Activated B cell treated with CpG ODN at 0.5 μM for 24 hours (primary cell): ENCODE measurements at regions of chr5 and their contacts with region 1.

Region 1: GRCh38 chr5:134904630-134905245 is at the start of gene PCBD2:
- DNase-seq: peak; percentile 92
- ATAC-seq: peak; percentile 80
- H3K4me3 Mint-ChIP-seq: peak within 1 kb of the TSS; percentile 91
- H3K27ac Mint-ChIP-seq: peak within 1 kb of the TSS; percentile 96
- H3K4me1 Mint-ChIP-seq: peaks cover 37% of the 10 kb centered on the region
- H3K27me3 Mint-ChIP-seq: no peaks in the 10 kb centered on the region
- CTCF ChIP-seq: no peak
- total RNA-seq, gene PCBD2: 8.4 and 11.5 TPM in 2 replicates

Region 2: DNA sequence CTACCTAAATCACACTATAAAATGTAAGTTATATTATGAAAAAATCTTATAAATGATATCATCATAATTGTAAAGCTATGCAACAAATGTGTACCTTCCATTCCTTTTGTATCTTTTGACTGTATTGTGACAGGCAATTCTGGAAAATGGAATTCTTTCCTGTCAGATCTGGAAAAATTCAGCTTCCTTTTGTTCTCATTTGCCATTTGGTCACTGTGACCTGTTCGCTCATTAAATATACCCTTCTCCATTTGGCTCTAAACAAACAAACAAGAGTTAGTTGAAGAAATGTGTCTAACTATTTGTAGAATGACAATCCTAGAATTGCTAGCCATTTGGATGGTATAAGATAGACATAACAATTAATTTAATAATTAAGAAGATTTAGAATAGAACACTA is 600.4 kb before region 1 on chr5:
- CTCF ChIA-PET with region 1: no interaction called
- POLR2A ChIA-PET with region 1: no interaction called
- intact Hi-C with region 1: loop called (anchors 2 kb)
- DNase-seq: no peak
- ATAC-seq: no peak
- H3K4me3 Mint-ChIP-seq: no peak overlapping the region
- H3K27ac Mint-ChIP-seq: no peak overlapping the region
- H3K4me1 Mint-ChIP-seq: no peaks in the 10 kb centered on the region
- H3K27me3 Mint-ChIP-seq: no peaks in the 10 kb centered on the region
- CTCF ChIP-seq: no peak

Region 3: DNA sequence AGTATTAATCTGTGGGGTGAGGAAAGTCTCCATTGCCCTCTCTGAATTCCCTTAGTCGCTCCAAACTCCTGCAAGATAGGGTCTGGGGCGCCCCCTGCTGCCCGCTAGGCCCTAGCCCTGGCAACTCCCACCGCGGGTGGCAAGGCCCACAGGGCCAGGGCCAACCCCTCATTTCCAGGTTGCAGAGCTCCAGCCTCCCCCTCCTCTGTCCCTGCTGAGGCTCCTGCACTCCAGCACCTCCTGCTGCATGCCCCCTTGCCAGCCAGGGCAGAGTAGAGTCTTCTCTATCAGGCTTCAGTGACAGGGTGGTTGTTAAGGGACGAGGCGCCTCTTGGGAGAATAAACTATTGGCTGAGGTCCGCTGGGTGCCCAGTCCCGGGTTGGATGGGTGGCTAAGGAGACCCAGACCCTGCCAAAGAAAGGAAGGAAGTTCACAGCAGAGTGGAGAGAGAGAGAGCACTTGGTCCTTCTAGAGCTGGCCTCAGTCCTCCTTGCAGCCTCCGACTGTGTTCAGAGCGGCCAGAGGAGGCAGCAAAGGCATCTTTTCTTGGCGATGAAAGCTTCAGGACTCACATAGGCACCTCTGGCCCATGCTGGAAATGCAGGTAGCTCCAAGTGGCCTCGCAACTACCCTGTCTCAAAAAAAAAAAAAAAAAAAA is 317.7 kb before region 1 on chr5:
- CTCF ChIA-PET with region 1: interaction called, 4 read pairs
- POLR2A ChIA-PET with region 1: interaction called, 3 read pairs
- intact Hi-C with region 1: loop called (anchors 1 kb)
- DNase-seq: peak; percentile 79
- ATAC-seq: peak; percentile 91
- H3K4me3 Mint-ChIP-seq: peak overlapping the region; percentile 15
- H3K27ac Mint-ChIP-seq: no peak overlapping the region
- H3K4me1 Mint-ChIP-seq: peaks cover 18% of the 10 kb centered on the region
- H3K27me3 Mint-ChIP-seq: no peaks in the 10 kb centered on the region
- CTCF ChIP-seq: peak; percentile 20

Region 4: DNA sequence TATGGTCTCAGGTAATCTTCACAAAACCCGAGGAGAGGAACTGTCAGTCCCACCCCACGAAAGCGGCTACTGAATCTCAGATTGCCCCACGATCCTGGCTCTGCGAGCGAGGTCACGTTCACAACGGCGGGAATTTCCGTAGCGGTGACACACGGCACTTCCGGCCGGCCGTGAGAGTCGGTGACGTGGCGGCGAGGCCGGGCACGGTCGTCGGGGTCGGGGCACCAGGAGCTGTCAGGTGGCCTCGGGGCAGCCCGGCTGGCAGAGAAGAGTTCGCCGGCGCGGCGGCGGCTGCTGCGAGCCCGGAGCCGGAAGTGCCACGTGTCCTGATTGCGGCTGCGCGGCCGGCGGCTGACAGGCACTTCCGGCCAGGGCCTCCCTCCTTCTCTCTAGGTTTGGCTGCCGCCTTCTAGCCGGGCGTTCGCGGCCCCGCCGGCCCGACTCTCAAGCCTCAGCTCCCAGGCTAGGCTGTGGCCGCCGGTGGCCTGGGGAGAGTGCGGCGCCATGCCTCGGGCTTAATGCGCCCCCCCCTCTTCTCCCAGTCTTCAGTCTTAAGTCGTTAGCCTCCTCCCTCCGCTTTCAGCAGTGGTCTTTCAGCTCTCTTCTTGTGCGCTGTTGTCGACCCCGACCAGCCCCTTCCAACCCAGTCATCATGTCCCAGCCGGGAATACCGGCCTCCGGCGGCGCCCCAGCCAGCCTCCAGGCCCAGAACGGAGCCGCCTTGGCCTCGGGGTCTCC is 256.1 kb before region 1 on chr5 and contains the start of gene SEC24A:
- CTCF ChIA-PET with region 1: no interaction called
- POLR2A ChIA-PET with region 1: interaction called, 4 read pairs
- intact Hi-C with region 1: loop called (anchors 1 kb)
- DNase-seq: peak; percentile 86
- ATAC-seq: peak; percentile 77
- H3K4me3 Mint-ChIP-seq: peak within 1 kb of the TSS; percentile 91
- H3K27ac Mint-ChIP-seq: peak within 1 kb of the TSS; percentile 96
- H3K4me1 Mint-ChIP-seq: peaks cover 22% of the 10 kb centered on the region
- H3K27me3 Mint-ChIP-seq: no peaks in the 10 kb centered on the region
- CTCF ChIP-seq: no peak
- total RNA-seq, gene SEC24A: 13.8 and 15.6 TPM in 2 replicates

Region 5: DNA sequence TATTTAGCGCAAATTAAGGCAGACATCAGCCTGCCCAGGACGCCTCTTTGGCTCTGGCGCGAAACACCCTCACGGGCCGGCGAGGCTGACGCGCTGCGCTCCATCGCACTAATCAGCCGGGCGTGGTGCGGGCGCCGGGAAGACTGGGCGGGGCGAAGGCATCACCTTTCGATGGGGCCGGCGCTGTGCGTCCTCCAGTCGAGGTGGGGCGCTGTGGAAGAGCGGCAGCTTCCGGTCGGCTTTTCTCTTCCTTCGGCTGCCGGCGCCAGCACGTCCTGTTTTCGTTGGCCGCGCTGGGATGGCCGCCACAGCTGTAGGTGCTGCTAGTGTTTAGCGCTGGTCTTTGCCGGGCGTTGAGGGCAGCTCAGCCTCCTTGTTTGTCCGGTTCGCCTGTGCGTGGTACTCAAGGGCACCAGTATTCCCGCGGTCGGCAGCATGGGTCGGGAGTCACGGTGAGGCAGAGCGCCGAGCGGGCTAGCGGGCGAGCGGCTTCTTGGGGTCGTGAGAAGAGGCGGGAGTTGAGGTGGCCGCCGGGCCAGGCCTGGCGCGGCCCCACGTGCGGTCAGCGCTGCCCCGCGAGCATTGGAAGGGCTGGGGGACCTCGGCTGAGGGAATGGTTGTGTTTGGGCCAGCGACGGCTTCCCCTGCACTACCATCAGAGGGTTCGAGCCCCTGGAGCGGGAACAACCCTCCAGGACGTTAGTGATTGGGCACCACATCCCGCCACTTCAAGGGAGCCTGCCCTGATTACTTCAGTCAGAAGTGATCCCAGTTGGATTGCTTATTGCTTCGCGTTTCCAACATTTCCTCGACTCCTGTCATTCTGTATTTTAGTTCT is 146.0 kb before region 1 on chr5 and contains the start of gene DDX46:
- CTCF ChIA-PET with region 1: interaction called, 6 read pairs
- POLR2A ChIA-PET with region 1: interaction called, 20 read pairs
- intact Hi-C with region 1: loop called (anchors 1 kb)
- DNase-seq: peak; percentile 95
- ATAC-seq: peak; percentile 99
- H3K4me3 Mint-ChIP-seq: peak within 1 kb of the TSS; percentile 100
- H3K27ac Mint-ChIP-seq: peak within 1 kb of the TSS; percentile 94
- H3K4me1 Mint-ChIP-seq: peaks cover 36% of the 10 kb centered on the region
- H3K27me3 Mint-ChIP-seq: no peaks in the 10 kb centered on the region
- CTCF ChIP-seq: no peak
- total RNA-seq, gene DDX46: 68.8 and 74.1 TPM in 2 replicates

Region 6: GRCh38 chr5:134813407-134813806 is 91.3 kb before region 1 on chr5:
- CTCF ChIA-PET with region 1: interaction called, 5 read pairs
- POLR2A ChIA-PET with region 1: no interaction called
- intact Hi-C with region 1: loop called (anchors 1 kb)
- DNase-seq: no peak
- ATAC-seq: peak; percentile 73
- H3K4me3 Mint-ChIP-seq: peak overlapping the region; percentile 15
- H3K27ac Mint-ChIP-seq: peak overlapping the region; percentile 74
- H3K4me1 Mint-ChIP-seq: peaks cover 17% of the 10 kb centered on the region
- H3K27me3 Mint-ChIP-seq: no peaks in the 10 kb centered on the region
- CTCF ChIP-seq: no peak

Region 7: DNA sequence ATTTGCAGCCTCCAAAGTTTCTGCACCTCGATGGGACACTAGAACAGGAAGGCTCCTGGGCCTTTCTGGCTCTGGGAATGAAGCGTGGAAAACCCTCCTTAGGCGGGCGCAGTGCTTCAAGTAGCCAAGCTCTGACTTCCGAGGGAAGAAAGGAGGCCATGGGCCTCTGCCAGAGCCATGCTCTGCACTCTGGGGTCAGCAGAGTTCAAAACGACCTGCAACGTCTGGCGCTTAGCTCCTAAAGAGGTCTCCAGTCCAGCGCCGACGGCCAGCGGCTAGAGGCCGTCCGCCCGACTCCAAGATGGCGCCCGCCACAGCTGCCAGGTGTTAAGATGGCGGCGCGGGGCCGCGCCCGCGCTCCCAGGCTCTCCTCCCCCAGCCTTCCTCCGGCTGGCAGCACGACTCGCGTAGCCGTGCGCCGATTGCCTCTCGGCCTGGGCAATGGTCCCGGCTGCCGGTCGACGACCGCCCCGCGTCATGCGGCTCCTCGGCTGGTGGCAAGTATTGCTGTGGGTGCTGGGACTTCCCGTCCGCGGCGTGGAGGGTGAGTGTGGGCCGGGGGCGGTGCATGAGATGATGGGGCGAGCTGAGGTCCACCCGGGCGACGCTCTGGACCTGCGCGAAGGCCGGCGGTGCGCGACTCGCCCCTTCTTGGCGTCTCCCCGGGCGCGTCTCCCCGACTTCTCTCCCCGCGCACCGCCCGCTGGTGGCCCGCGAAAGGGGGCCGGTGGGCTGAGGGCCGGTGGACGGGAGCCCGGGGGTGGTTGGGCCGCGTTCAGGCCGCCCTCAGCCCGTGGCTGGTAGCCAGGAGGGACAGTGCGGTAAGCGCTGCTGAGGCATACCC is 30.5 kb before region 1 on chr5 and contains the start of gene TXNDC15:
- CTCF ChIA-PET with region 1: interaction called, 12 read pairs
- POLR2A ChIA-PET with region 1: interaction called, 66 read pairs
- intact Hi-C with region 1: loop called (anchors 1 kb)
- DNase-seq: peak; percentile 78
- ATAC-seq: peak; percentile 93
- H3K4me3 Mint-ChIP-seq: peak within 1 kb of the TSS; percentile 95
- H3K27ac Mint-ChIP-seq: peak within 1 kb of the TSS; percentile 94
- H3K4me1 Mint-ChIP-seq: peaks cover 34% of the 10 kb centered on the region
- H3K27me3 Mint-ChIP-seq: no peaks in the 10 kb centered on the region
- CTCF ChIP-seq: no peak
- total RNA-seq, gene TXNDC15: 26.6 and 30.7 TPM in 2 replicates

Region 8: DNA sequence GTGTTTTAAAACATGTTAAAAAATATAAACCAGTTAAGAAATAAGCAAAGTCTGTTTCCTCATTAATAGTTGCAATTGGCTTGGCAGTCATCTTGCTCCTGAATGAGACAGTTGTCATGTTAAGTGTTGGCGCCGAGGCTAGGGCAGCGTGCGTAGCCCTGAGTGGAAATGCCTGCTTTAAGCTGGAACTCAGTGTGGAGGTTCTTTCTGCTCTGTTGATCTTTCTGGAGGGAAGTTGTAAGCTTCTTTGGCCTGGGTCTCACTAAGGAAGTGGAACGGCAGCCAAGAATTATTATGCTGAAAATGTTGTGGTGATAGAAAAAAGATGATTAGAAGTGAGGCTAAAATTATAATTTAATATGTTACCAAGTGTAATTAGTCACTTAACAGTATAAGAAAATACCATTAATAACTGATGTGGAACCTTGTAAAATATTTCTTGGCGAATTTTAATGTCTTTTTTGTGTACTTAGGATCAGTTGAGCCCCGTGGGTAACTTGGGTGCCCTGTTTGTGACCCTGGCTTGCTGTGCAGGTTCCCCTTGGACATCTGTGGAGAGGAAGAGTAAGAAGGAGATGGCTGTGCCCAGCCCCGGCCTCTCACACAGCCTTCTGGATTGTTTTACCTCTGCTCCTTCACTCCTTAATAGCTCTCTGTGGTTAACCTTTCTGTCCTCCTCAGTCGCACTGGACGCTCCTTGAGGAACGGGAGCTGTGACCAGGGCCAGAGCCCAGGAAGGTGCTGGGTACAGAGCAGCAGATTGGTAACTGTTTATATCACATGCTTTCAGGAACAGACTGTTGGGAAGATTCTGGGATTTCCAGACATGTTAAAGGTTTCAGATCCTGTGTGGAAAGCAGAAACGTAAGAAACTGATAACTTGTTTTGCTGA is 31.2 kb after region 1 on chr5:
- CTCF ChIA-PET with region 1: no interaction called
- POLR2A ChIA-PET with region 1: no interaction called
- intact Hi-C with region 1: no loop called
- DNase-seq: no peak
- ATAC-seq: no peak
- H3K4me3 Mint-ChIP-seq: no peak overlapping the region
- H3K27ac Mint-ChIP-seq: no peak overlapping the region
- H3K4me1 Mint-ChIP-seq: no peaks in the 10 kb centered on the region
- H3K27me3 Mint-ChIP-seq: no peaks in the 10 kb centered on the region
- CTCF ChIP-seq: no peak

Region 9: DNA sequence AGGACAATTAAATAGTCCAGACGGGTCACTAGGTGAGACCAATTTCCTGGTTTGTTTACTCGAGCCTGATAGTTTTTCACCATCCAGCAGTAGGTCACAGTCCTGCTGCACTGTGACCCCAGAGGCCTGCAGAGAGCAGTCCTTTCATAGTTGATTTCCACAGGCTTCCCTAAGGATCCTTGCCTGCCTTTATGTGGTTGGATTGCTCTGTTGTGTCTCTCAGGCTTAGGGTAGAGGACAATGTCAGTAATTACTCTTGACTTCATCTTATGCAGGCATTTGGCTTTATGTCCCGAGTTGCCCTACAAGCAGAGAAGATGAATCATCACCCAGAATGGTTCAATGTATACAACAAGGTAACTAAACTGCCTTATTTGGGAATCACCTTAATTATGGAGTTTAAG is 54.0 kb after region 1 on chr5:
- CTCF ChIA-PET with region 1: no interaction called
- POLR2A ChIA-PET with region 1: no interaction called
- intact Hi-C with region 1: no loop called
- DNase-seq: no peak
- ATAC-seq: no peak
- H3K4me3 Mint-ChIP-seq: no peak overlapping the region
- H3K27ac Mint-ChIP-seq: no peak overlapping the region
- H3K4me1 Mint-ChIP-seq: no peaks in the 10 kb centered on the region
- H3K27me3 Mint-ChIP-seq: no peaks in the 10 kb centered on the region
- CTCF ChIP-seq: no peak

Region 10: GRCh38 chr5:135076051-135076491 is 171.3 kb after region 1 on chr5:
- CTCF ChIA-PET with region 1: no interaction called
- POLR2A ChIA-PET with region 1: no interaction called
- intact Hi-C with region 1: no loop called
- DNase-seq: no peak
- ATAC-seq: no peak
- H3K4me3 Mint-ChIP-seq: no peak overlapping the region
- H3K27ac Mint-ChIP-seq: no peak overlapping the region
- H3K4me1 Mint-ChIP-seq: no peaks in the 10 kb centered on the region
- H3K27me3 Mint-ChIP-seq: peaks cover 7% of the 10 kb centered on the region
- CTCF ChIP-seq: no peak